Vagina (tissue), 2 donors: ENCODE measurements at regions of chr6 and their contacts with region 1.

Region 1: DNA sequence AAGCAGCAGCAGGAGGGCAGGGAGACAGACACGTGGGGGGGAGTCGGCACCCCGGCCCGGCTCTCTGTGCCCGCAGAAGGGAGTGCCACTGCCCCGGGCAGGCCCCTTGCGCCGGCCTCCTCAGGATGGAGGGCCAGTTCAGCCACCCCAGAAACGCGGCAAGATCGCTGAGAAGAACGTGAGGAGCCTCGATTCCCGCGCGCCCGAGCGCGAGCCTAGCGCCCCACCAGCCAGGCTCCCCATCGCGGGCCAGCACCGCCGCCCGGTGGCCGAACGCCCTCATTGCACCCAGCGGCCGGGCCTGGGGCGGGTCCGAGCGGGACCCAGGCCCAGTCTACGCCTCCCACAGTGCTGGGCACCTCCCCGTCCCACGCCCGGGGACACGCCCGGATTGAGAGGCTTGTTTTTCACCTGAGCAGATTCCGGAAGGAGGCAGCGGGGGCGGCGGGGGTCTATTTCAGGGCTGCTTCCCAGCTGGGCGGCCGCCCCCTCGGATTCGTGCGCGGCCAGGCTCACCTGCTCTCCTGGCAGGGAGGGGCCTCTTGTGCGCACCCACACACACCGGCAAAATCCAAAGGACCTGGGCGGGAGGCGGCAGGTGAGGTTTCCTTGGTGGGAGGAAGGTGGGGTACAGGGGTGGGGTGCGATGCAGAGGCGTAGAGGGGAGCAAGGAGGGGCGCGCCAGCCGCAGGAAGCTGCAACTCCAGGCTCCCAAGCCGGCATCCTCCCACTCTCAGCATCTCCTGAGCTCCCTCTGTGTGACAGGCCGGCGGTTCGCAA is 9.0 kb upstream of the GRM4 start:
- DNase-seq: no peak
- H3K4me3 ChIP-seq: peak overlapping the region in 1 of 2 donors; percentile 35
- H3K27ac ChIP-seq: no peak overlapping the region
- H3K4me1 ChIP-seq: peaks cover 10% of the 10 kb centered on the region
- H3K27me3 ChIP-seq: no peaks in the 10 kb centered on the region
- CTCF ChIP-seq: peak; percentile 81 to 92 (median 92)
- POLR2A ChIP-seq: no peak

Region 2: GRCh38 chr6:33771146-33772081 is 383.4 kb before region 1 on chr6:
- intact Hi-C with region 1: loop called (anchors 10 kb)
- DNase-seq: no peak
- H3K4me3 ChIP-seq: peak overlapping the region; percentile 27 to 30
- H3K27ac ChIP-seq: peak overlapping the region; percentile 90
- H3K4me1 ChIP-seq: peaks cover 56% of the 10 kb centered on the region
- H3K27me3 ChIP-seq: no peaks in the 10 kb centered on the region
- CTCF ChIP-seq: peak; percentile 58 to 92 (median 88)
- POLR2A ChIP-seq: peak in 1 of 2 donors; percentile 17